Activated naive CD4-positive, alpha-beta T cell treated with anti-CD3 and anti-CD28 coated beads for 36 hours (primary cell): ENCODE measurements at regions of chr20 and their contacts with region 1.

Region 1: GRCh38 chr20:21505161-21505809 is 8.6 kb downstream of the NKX2-2 start:
- DNase-seq: peak; percentile 82
- H3K4me3 Mint-ChIP-seq: peak overlapping the region; percentile 62
- H3K27ac Mint-ChIP-seq: no peak overlapping the region
- H3K4me1 Mint-ChIP-seq: peaks cover 28% of the 10 kb centered on the region
- H3K27me3 Mint-ChIP-seq: peaks cover 53% of the 10 kb centered on the region

Region 2: DNA sequence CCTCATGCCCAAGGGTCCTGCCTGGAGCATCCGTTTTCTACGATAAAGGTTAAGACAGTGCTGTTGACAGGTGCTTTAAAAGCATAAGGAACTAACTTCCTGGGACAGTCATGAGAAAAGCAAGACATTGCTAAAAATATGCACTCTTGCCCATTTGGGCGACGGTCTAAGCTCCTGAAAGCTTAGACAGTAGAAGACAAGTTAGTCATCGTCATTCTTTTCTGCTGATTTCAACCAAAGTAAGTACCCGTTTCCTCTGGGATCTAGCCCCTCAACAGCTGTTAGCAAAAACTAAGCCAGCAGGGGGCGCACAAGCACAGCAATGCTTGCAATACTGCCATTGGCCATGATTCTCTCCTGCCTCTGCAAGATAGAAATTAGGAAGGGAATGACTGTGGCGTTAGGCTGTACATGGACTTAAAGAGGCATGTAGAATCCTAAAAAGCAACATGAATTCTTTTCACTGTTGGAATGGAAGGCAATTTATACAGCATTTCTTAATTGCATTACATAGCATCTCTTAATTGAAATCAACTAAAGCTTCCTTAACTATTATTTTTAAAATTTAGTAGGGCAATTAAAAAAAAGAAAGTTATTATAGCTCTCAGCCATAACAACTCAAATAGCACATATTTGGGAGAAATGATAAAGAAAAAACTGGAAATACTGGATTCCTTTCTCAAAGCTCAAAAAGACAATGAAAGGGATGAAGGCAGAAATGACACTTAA is 645.0 kb before region 1 on chr20:
- CTCF ChIA-PET with region 1: interaction called, 22 read pairs
- intact Hi-C with region 1: loop called (anchors 1 kb)
- DNase-seq: peak; percentile 95
- H3K4me3 Mint-ChIP-seq: no peak overlapping the region
- H3K27ac Mint-ChIP-seq: no peak overlapping the region
- H3K4me1 Mint-ChIP-seq: no peaks in the 10 kb centered on the region
- H3K27me3 Mint-ChIP-seq: peaks cover 20% of the 10 kb centered on the region

Region 3: DNA sequence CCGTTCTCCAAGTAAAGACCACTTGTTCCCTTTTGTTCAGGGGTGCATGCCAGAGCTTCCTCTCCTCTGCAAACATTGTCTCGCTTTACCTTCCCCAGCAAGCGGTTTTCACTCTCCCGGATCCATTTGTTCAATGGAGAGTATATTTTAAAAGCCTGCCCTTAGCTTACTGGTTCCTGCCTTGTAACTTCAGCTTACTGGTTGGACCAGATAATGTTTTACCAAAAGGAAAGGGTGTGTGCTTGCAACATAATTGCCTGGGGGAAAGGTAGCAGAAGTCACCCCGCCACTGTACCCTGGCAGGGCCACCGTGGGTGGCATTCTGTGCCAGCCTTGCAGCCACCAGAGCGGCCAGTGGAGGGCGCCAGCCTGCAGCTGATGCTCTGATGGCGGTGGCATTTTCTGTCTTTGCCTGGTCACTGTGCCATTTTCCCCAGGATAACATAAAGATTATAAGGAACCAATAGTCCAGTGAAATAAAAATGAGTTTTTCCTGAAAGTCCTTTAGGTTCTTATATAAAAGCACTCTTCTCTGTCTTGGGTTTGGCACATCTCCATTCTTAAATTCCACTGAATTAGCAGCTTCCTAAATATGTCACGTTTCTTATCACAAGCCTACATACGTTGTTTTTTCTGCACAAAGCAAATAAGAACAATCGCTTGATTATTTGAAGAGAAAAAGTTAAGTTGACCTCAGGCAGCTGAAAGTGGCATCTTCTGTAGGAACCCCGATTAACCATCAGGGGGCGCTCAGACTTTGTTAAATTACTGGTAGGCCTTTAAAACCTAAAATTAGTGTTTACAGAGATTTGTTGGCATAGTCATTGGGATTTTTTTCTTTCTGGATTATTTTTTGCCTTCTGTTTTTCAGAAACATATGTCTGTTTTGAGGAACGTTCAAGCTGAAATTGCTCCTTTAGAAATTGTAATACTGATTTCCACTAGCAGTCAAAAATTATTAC is 269.5 kb before region 1 on chr20:
- CTCF ChIA-PET with region 1: interaction called, 110 read pairs
- intact Hi-C with region 1: loop called (anchors 1 kb)
- DNase-seq: peak; percentile 83
- H3K4me3 Mint-ChIP-seq: no peak overlapping the region
- H3K27ac Mint-ChIP-seq: no peak overlapping the region
- H3K4me1 Mint-ChIP-seq: no peaks in the 10 kb centered on the region
- H3K27me3 Mint-ChIP-seq: no peaks in the 10 kb centered on the region

Region 4: GRCh38 chr20:21520702-21521595 is 15.7 kb after region 1 on chr20:
- CTCF ChIA-PET with region 1: interaction called, 8 read pairs
- intact Hi-C with region 1: loop called (anchors 2 kb)
- DNase-seq: no peak
- H3K4me3 Mint-ChIP-seq: no peak overlapping the region
- H3K27ac Mint-ChIP-seq: no peak overlapping the region
- H3K4me1 Mint-ChIP-seq: peaks cover 48% of the 10 kb centered on the region
- H3K27me3 Mint-ChIP-seq: peaks cover 88% of the 10 kb centered on the region

Region 5: DNA sequence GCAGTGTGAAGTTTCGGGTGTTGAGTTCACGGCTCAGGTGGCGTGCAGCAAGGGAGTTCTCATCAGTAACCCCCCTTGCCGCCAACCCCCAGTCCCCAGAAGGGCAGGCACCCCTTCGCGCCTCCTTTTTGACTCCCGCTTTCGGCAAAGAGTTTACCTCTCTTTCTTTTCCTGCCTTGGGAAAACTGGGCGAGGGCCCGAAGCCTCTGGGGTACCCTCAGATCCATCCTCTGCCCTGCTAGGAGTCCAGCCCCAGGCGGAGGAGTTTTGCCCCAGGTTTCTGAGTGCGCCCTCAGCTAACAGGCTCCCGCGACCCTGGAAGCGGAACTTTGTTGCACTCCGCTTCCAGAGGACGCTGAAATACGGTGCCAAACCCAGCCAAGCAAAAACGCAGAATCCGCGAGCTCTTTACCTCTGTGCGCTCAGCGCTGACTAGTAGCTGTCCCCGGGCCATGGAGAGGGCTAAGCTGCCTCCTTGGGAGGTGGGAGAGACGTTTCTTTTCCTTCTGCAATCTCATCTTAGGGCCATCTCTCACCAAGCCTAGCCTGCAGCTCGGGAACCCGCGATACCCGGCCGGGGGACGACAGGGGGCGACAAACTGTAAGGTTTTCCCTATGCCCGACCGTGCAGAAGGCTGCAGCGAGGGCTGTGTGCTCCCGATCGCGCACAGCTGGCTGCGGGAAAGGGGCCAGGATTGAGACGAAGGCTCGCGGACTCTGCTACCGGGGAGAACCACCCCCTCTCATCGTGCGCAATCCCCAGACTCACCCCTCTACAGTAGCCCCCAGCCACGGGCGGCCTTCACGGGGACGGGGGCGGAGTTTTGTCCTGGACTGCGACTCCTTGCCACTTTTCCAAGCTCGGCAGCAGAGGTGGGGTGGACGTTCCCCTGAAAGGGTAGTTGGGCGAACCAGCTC is 197.5 kb after region 1 on chr20:
- CTCF ChIA-PET with region 1: no interaction called
- intact Hi-C with region 1: loop called (anchors 5 kb)
- DNase-seq: peak; percentile 71
- H3K4me3 Mint-ChIP-seq: no peak overlapping the region
- H3K27ac Mint-ChIP-seq: no peak overlapping the region
- H3K4me1 Mint-ChIP-seq: peaks cover 12% of the 10 kb centered on the region
- H3K27me3 Mint-ChIP-seq: peaks cover 83% of the 10 kb centered on the region